Activated naive CD8-positive, alpha-beta T cell treated with anti-CD3 and anti-CD28 coated beads, Interleukin-2, amount 10 ng/mL, durations not matched to agents 7 days and 5 days (primary cell): ENCODE measurements at regions of chr5 and their contacts with region 1.

Region 1: GRCh38 chr5:65721720-65722574 is at the starts of genes NLN and SGTB:
- DNase-seq: peak; percentile 95
- ATAC-seq: peak; percentile 91
- H3K4me3 Mint-ChIP-seq: peak within 1 kb of the TSS; percentile 94
- H3K27ac Mint-ChIP-seq: peak within 1 kb of the TSS; percentile 88
- H3K4me1 Mint-ChIP-seq: peaks cover 33% of the 10 kb centered on the region
- H3K27me3 Mint-ChIP-seq: no peaks in the 10 kb centered on the region
- total RNA-seq, gene NLN: 10.0 to 10.9 TPM
- total RNA-seq, gene SGTB: 25.3 to 26.9 TPM

Region 2: GRCh38 chr5:65562731-65563701 is 158.9 kb before region 1 on chr5 and contains the starts of genes CENPK and PPWD1:
- POLR2A ChIA-PET with region 1: interaction called, 10 read pairs
- DNase-seq: peak; percentile 92
- ATAC-seq: peak; percentile 98
- H3K4me3 Mint-ChIP-seq: peak within 1 kb of the TSS; percentile 96
- H3K27ac Mint-ChIP-seq: peak within 1 kb of the TSS; percentile 99
- H3K4me1 Mint-ChIP-seq: peaks cover 46% of the 10 kb centered on the region
- H3K27me3 Mint-ChIP-seq: no peaks in the 10 kb centered on the region
- total RNA-seq, gene CENPK: 89.9 to 90.7 TPM
- total RNA-seq, gene PPWD1: 72.7 to 78.6 TPM

Region 3: GRCh38 chr5:65624571-65625555 is 97.1 kb before region 1 on chr5 and contains the starts of genes SHLD3 and TRAPPC13:
- POLR2A ChIA-PET with region 1: interaction called, 14 read pairs
- DNase-seq: peak; percentile 74
- ATAC-seq: peak; percentile 72
- H3K4me3 Mint-ChIP-seq: peak within 1 kb of the TSS; percentile 97
- H3K27ac Mint-ChIP-seq: peak within 1 kb of the TSS; percentile 98
- H3K4me1 Mint-ChIP-seq: peaks cover 26% of the 10 kb centered on the region
- H3K27me3 Mint-ChIP-seq: no peaks in the 10 kb centered on the region
- total RNA-seq, gene SHLD3: 4.3 to 4.4 TPM
- total RNA-seq, gene TRAPPC13: 18.8 to 24.1 TPM

Region 4: GRCh38 chr5:65925601-65926275 is 203.8 kb after region 1 on chr5:
- POLR2A ChIA-PET with region 1: interaction called, 14 read pairs
- DNase-seq: no peak
- ATAC-seq: peak; percentile 62
- H3K4me3 Mint-ChIP-seq: peak overlapping the region; percentile 89
- H3K27ac Mint-ChIP-seq: peak overlapping the region; percentile 94
- H3K4me1 Mint-ChIP-seq: peaks cover 23% of the 10 kb centered on the region
- H3K27me3 Mint-ChIP-seq: peaks cover 14% of the 10 kb centered on the region